ENCODE measurements at regions of chr4 and their contacts with region 1.

Region 1: DNA sequence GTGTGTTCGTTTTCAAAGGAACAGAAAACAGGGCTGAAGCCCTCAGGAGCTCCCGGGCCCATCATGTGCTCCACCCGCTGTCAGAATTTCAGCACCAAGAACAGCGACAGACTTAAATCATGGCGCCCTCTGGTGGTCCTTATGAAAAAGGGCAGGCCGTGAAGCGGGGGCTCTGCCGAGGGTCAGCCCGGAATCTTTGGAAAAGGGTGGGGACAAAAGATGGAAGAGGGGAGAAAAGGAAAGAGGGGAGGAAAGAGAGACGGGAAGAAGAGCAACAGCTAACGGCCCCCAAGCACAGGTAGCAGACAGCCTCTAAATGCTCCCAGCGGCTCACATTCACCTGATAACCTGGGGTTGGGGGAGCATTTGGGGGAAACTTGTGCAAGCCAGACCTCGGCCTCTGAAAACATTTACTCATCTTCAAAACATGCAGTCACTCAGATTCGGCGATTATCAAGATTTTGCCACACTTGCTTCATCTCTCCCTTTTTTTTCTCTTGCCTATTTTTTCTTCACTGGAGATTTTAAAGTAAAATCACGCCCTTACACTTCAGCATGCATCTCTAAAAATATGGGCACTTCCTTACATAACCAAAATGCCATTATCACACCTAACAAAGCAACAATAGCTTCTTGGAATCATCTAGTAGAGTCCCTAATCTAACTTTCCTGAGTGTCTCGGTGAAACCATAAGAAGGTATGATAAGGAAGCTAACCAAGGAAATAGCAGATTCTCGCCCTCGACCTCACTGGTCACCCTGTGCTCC is 28.1 kb upstream of the MAN2B2 start:
- DNase-seq: peak; percentile 79
- H3K4me3 ChIP-seq: no peak overlapping the region
- H3K27ac ChIP-seq: no peak overlapping the region
- H3K4me1 ChIP-seq: no peaks in the 10 kb centered on the region
- CTCF ChIP-seq: peak; percentile 96

Region 2: GRCh38 chr4:6095023-6095752 is 451.7 kb before region 1 on chr4:
- CTCF ChIA-PET with region 1: no interaction called
- POLR2A ChIA-PET with region 1: no interaction called
- intact Hi-C with region 1: no loop called
- DNase-seq: no peak
- H3K4me3 ChIP-seq: no peak overlapping the region
- H3K27ac ChIP-seq: no peak overlapping the region
- H3K4me1 ChIP-seq: no peaks in the 10 kb centered on the region
- CTCF ChIP-seq: no peak

Region 3: GRCh38 chr4:6250235-6250983 is 296.5 kb before region 1 on chr4:
- CTCF ChIA-PET with region 1: no interaction called
- POLR2A ChIA-PET with region 1: no interaction called
- intact Hi-C with region 1: loop called (anchors 5 kb)
- DNase-seq: peak; percentile 72
- H3K4me3 ChIP-seq: no peak overlapping the region
- H3K27ac ChIP-seq: no peak overlapping the region
- H3K4me1 ChIP-seq: no peaks in the 10 kb centered on the region
- CTCF ChIP-seq: peak; percentile 90

Region 4: DNA sequence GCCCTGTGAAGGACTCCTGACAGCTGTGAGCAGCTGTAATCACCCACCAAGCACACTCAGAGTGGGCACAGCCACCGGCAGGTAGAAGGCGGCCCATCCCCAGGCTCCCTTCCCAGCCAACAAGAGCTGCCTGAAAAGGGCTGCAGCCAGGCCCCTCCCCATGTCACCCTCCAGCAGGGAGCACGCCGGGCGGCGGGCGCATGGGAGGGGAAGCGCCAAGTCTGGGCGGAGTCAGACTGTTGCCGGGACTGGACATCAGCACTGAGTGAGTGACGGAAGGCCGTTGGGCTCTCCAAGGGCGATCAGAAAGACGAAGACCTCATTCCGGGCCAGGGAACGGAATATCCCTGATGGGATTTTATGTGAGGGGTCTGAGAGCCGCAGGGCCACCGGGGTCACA is 156.5 kb before region 1 on chr4:
- CTCF ChIA-PET with region 1: no interaction called
- POLR2A ChIA-PET with region 1: no interaction called
- intact Hi-C with region 1: loop called (anchors 10 kb)
- DNase-seq: no peak
- H3K4me3 ChIP-seq: no peak overlapping the region
- H3K27ac ChIP-seq: no peak overlapping the region
- H3K4me1 ChIP-seq: no peaks in the 10 kb centered on the region
- CTCF ChIP-seq: no peak

Region 5: DNA sequence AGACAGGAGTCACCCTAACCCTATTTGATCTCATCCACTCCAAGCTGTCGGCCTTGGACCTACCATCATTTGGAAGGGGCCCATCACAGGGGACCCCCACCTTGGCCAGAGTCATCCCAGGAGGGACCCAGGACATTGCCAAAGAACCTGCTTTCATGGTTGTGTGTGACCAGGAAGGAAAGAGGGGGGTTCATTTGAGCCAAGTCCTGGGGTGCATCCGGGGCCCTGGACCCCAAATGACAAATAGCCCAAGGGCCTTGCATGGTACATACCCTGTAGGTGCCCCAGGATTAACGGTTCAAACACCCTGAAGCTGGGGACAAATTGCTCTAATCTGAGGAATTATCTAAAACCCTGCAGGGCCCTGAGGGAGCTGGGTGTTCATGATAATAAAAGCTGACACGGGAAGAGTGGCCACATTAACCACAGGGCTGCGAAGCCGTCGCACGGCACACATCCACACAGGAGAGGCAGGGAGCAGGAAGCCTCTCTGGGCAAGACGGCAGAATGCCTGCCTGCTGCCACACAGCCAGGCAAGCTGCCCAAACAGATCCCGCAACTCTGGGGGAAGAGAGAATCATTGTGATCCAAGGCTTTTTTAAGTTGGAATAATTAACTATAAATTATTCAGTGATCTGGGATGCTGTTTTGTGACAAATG is 46.3 kb before region 1 on chr4:
- CTCF ChIA-PET with region 1: no interaction called
- POLR2A ChIA-PET with region 1: no interaction called
- intact Hi-C with region 1: no loop called
- DNase-seq: no peak
- H3K4me3 ChIP-seq: no peak overlapping the region
- H3K27ac ChIP-seq: no peak overlapping the region
- H3K4me1 ChIP-seq: no peaks in the 10 kb centered on the region
- CTCF ChIP-seq: no peak

Region 6: GRCh38 chr4:6608758-6609414 is 62.0 kb after region 1 on chr4:
- CTCF ChIA-PET with region 1: no interaction called
- POLR2A ChIA-PET with region 1: no interaction called
- intact Hi-C with region 1: no loop called
- DNase-seq: no peak
- H3K4me3 ChIP-seq: no peak overlapping the region
- H3K27ac ChIP-seq: no peak overlapping the region
- H3K4me1 ChIP-seq: no peaks in the 10 kb centered on the region
- CTCF ChIP-seq: 0 out of 2 replicates have a peak, but pooled peaks have one; percentile 28

Region 7: DNA sequence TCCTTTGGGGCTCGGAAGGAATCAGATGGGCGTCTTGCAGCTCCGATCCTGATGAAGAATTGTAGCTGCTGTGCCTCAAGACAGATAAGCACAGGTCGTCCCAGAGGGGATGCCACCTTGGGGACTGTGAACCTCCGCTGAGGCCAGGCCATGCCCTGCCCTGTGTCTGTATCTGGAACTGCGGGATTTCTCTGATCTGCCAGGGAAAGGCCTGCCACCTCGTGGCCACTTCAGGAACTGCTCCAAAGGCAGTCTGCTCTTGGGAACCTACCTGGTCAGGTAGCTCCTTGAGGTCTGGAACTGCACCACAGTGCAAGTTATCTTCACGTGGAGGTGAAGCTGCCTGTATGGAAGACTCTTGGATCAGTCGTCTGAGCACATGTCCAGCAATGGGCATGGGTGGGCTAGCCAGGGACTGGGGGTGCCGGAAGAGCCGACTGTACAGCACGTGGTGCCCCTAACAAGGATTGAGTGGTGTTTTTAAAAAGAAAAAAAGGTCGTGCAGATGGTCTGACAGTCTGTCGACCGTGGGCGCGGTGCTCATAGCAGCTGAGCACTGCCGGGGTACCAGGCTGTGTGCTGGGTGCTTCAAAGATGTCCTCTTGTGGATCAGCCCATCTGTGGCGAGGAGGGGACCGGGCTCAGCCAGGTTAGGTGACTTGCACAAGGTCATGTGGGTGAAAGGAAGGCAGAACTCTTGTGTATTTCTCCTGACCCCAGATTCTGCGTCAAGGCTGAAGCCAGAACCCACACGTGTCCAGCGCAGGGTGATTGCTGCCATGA is 524.1 kb after region 1 on chr4:
- CTCF ChIA-PET with region 1: no interaction called
- POLR2A ChIA-PET with region 1: no interaction called
- intact Hi-C with region 1: no loop called
- DNase-seq: peak; percentile 84
- H3K4me3 ChIP-seq: no peak overlapping the region
- H3K27ac ChIP-seq: no peak overlapping the region
- H3K4me1 ChIP-seq: peaks cover 21% of the 10 kb centered on the region
- CTCF ChIP-seq: peak; percentile 94